RWPE1 (cell line): ENCODE measurements at regions of chr15 and their contacts with region 1.

Region 1: DNA sequence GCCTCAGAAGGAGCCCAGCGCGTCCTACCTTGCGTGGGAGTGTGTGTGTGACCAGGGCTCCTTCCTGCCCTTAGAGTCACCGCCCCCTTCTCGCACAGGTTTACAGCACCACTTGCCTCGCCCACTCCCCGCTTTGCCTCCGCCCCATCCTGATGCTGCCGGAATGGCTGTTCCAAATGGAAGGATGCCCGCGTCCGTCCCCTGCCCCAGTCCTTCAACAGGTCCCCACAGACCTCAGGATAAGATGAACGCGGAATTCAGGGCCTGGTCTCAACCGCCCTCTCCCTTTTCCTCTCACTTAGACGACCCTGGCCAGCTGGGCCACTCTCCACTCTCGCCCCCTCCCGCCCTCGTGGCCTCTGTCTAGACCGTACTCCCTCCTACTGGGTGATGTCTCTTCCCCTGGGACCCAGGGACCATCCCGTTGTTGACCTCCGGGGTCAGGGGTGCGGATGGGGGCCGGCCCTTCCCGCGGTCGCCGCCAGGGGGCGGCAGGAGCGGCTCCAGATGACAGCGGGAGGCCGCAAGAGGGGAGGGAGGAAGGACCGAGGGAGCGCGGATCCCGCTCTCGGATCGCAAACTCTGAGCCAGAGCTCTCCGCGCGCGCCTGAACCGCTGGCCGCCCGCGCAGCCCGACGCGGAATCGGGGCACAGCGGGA is at the start of gene THSD4:
- DNase-seq: peak; percentile 94
- H3K27ac ChIP-seq: peak within 1 kb of the TSS; percentile 88
- CTCF ChIP-seq: peak; percentile 99

Region 2: GRCh38 chr15:71228403-71228802 is 113.4 kb after region 1 on chr15:
- CTCF ChIA-PET with region 1: interaction called, 14 read pairs
- POLR2A ChIA-PET with region 1: no interaction called
- DNase-seq: no peak
- H3K27ac ChIP-seq: no peak overlapping the region
- CTCF ChIP-seq: no peak